ENCODE measurements at regions of chr20 and their contacts with region 1.

Region 1: GRCh38 chr20:63520504-63520933 is at the start of gene PPDPF:
- DNase-seq: peak; percentile 70 to 93 (median 81)
- H3K4me3 ChIP-seq: peak within 1 kb of the TSS; percentile 58 to 98 (median 88)
- H3K27ac ChIP-seq: peak within 1 kb of the TSS; percentile 57 to 100 (median 96)
- H3K27me3 ChIP-seq: no peaks in the 10 kb centered on the region
- CTCF ChIP-seq: peak in 2 of 56 donors; percentile 3 to 6
- total RNA-seq, gene PPDPF: 80.2 to 340 (median 148) TPM

Region 2: DNA sequence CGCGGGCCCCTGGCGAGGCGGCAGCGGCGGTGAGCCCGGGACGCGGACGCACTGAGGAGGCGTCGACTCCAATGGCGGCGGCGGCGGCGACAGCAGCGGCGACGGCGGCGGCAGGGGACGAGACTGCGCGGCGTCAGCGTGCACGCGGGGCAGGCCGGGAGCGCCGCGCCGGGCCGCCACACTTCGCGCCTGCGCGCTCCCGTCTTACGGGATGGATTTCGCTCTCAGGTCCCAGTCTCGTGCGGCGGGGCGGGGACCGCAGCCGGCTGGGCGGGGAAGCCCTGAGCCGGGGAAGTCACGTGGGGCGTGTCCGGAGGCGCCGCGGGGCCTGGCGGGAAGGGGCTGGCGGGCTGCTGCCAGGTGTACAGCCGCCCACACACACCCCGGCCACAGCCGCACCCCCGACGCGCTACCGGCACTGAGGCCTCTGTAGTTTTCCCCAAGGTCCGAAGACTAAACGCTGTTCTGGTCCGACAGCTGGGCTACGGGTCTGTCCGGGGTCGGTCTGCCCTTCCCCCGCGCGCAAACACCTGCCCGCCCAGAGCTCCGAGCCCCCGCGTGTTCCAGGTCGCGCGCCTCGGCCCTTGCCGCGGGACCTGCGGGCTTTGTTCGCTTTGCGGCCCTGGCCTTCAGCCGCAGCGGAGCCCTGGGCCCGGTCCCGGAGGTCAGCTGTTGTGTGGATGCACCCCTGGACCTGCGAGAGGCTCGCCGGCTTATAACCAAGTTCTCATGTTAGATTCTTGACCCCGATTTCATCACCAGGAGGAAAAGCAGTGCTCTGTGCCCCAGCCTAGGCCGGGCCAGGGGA is 304.3 kb before region 1 on chr20 and contains the start of gene YTHDF1:
- intact Hi-C with region 1: loop called in 1 of 2 experiments (anchors 10 kb)
- DNase-seq: peak; percentile 87 to 97 (median 94)
- H3K4me3 ChIP-seq: peak within 1 kb of the TSS; percentile 65 to 98 (median 89)
- H3K27ac ChIP-seq: peak within 1 kb of the TSS; percentile 37 to 95 (median 87)
- H3K27me3 ChIP-seq: no peaks in the 10 kb centered on the region
- CTCF ChIP-seq: peak in 31 of 56 donors; percentile 9 to 60 (median 33)
- total RNA-seq, gene YTHDF1: 31.4 to 71.9 (median 38.9) TPM

Region 3: DNA sequence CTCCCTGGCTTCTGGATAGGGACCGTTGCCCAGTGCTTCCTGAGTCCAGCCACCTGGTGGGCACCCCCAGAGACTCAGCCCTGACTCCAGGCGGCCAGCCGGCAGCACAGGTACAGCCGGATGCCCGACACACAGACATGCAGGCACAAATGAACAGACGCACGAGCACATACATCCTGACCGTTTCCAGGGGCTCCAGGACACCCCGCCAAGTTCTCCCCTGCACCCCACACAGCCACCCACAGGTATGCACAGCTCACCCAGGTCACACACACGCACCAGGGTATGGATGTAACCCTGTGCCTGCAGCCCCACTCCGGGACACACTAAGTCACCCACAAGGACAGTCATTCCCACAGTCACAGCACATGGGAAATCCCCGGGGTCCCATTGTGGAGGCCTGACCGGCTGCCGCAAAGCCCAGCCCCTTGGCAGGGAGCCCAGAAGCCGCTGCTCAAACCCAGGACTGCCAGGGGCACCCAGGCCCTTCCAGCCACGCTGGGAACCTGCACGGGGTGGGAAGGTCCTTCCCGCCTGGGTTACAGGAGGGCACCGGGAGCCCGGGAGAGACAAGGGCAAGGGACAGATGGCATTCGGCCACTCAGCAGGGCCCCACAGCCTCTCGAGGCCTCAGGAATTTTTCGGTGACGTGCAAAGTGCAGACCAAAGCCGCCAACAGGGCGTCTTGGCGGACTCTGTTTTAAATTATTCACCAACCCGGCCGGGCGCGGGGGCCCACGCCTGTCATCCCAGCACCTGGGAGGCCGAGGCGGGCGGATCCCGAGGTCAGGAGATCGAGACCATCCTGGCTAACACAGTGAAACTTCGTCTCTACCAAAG is 37.4 kb before region 1 on chr20:
- intact Hi-C with region 1: no loop called
- DNase-seq: no peak
- H3K4me3 ChIP-seq: no peak overlapping the region
- H3K27ac ChIP-seq: no peak overlapping the region
- H3K27me3 ChIP-seq: peaks cover 0 to 25% (median 0%) of the 10 kb centered on the region in 45 donors
- CTCF ChIP-seq: no peak

Region 4: GRCh38 chr20:63495741-63496595 is 24.6 kb before region 1 on chr20:
- intact Hi-C with region 1: loop called (anchors 2 kb)
- DNase-seq: peak in 5 of 10 donors; percentile 47 to 83 (median 54)
- H3K4me3 ChIP-seq: peak overlapping the region; percentile 12 to 78 (median 61)
- H3K27ac ChIP-seq: peak overlapping the region in 20 of 59 donors; percentile 3 to 95 (median 42)
- H3K27me3 ChIP-seq: peaks cover 0 to 15% (median 0%) of the 10 kb centered on the region in 45 donors
- CTCF ChIP-seq: peak; percentile 69 to 98 (median 93)

Region 5: DNA sequence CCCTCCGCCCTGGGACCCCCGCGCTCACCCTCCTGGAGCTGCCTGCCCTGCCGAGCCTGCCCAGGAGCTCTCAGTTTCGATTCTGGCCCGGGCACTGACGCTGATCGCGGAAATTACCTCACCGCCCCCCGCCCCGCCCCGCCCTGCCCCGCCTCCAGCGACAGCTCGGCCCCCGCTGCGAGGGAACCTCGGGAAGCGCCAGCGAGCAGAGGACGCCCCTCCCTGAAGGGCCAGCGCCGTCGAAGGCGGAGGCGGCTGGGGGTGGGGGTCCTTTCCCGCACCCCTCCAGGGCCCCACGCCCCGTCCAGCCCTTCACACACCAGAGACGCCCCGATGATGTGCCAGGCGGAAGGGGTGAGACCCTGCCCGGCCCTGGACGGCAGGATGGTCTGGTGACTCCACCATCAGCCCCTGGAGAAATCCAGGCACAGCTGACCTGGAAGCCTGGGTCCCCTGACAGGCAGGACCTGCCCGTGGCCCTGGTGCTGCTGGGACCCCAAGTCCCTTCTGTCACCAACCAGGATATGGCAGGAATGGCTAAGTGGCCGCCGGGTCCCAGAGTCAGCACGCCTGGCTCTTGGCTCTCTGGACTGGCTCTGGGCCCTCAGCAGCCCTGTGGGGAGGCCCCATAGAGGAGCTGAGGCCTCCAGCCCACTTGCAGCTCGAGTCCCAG is 53.8 kb after region 1 on chr20 and contains the start of gene HELZ2:
- intact Hi-C with region 1: no loop called
- DNase-seq: no peak
- H3K4me3 ChIP-seq: peak within 1 kb of the TSS; percentile 36 to 78 (median 65)
- H3K27ac ChIP-seq: peak within 1 kb of the TSS in 18 of 59 donors; percentile 16 to 83 (median 41)
- H3K27me3 ChIP-seq: peaks cover 0 to 15% (median 0%) of the 10 kb centered on the region in 45 donors
- CTCF ChIP-seq: no peak
- total RNA-seq, gene HELZ2: 3.1 to 36.9 (median 8.3) TPM

Region 6: DNA sequence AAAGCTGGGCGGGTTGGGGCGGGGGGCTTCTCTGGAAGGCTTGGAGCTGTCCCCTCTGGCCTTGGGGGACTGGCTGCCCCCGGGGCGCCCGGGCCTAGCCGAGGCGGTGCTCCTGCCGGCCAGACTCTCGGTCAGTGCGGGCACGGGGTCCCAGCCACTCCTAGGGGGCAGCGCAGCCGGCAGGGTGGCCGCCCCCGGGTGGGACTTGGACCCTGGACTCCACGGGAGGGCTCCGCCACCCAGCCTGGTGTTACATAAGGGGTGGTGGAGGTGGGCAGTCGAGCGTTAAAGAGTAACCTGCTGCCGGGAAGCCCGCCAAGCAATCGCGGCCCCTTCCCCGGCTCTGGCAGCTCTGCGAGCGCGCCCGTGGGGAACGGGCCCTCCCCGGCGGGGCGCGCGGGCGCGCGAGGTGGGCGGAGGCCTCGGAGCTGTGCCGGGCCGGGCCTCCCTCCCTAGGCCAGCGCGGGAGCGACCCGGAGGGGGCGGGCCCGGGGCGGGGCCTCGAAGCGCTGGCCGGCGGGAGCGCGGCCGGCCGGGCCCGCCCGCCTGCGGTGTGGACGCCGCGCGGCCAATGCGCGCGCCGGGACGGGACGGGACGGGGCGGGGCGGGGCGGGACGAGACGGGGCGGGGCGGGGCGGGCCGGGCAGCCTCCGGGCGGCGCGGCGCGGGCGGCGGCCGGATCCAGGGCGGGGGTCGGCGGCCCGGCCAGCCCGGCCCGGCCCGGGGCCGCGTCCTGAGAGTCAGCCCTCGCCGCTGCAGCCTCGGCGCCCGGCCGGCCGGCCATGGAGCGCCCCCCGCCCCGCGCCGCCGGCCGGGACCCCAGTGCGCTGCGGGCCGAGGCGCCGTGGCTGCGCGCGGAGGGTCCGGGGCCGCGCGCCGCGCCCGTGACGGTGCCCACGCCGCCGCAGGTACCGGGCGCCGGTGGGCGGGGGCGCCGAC is 218.9 kb after region 1 on chr20 and contains the start of gene SLC2A4RG:
- intact Hi-C with region 1: loop called in 1 of 2 experiments (anchors 10 kb)
- DNase-seq: peak in 8 of 10 donors; percentile 47 to 89 (median 74)
- H3K4me3 ChIP-seq: peak within 1 kb of the TSS; percentile 42 to 76 (median 64)
- H3K27ac ChIP-seq: peak within 1 kb of the TSS; percentile 39 to 96 (median 91)
- H3K27me3 ChIP-seq: no peaks in the 10 kb centered on the region
- CTCF ChIP-seq: no peak
- total RNA-seq, gene SLC2A4RG: 15.1 to 78.0 (median 33.5) TPM

Measured in dorsolateral prefrontal cortex (tissue), 120 donors.